B cell (primary cell): ENCODE measurements at regions of chr11 and their contacts with region 1.

Region 1: DNA sequence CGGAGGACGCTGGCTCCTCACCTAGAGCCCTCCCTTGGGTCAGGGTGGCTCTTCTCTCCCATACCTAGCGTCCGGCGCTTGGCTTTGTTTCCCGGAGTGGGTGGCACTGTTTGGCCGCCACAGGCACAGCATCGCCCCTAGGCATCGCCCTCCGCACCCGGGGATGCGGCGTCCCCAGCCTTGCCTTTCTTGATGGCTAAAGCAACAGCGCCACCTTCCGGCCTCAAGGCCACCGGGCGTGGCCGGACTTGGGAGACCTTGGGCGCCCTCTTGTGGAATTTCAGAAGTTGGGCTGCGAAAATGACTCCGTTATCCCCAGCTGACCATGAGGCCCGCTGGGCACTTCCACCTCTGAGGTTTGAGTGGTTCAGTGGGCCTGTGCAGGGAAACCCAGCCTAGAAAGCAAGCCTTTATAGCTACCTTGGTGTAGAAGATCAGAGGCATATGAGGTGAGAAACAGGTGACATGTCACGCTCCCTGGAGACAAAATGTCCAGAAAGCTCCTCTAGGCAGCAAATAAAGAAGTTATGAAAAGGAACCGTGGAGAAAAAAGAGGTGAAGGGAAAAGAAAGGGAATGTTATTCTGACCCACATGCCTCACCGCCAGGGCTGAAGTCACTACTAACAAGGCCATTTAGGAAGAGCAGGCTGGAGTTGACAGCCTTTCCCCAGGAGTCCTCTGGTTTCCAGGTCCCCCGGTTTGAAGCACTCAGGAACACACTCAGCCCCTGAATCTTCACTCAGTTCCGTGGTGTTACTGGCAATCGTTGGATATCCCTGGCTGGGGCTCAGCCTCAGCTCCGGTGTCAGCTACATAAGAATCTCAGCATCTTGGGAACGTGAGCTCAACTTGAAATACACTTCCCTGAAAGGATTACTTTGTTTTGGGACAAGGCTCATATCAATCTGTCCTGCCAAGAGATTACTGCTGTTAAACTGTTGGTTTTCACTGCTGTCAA is 54.1 kb downstream of the SNX19 start:
- DNase-seq: peak; percentile 90
- ATAC-seq: peak; percentile 90
- H3K4me3 ChIP-seq: no peak overlapping the region
- H3K4me3 Mint-ChIP-seq: no peak overlapping the region
- H3K27ac ChIP-seq: no peak overlapping the region
- H3K27ac Mint-ChIP-seq: no peak overlapping the region
- H3K4me1 ChIP-seq: peaks cover 0 to 4% of the 10 kb centered on the region in 2 donors
- H3K4me1 Mint-ChIP-seq: peaks cover 12% of the 10 kb centered on the region
- H3K27me3 ChIP-seq: no peaks in the 10 kb centered on the region
- H3K27me3 Mint-ChIP-seq: no peaks in the 10 kb centered on the region
- CTCF ChIP-seq: peak; percentile 100

Region 2: GRCh38 chr11:130213143-130213978 is 648.8 kb before region 1 on chr11:
- CTCF ChIA-PET with region 1: interaction called, 51 read pairs
- POLR2A ChIA-PET with region 1: no interaction called
- intact Hi-C with region 1: loop called (anchors 1 kb)
- DNase-seq: peak; percentile 81
- ATAC-seq: peak; percentile 98
- H3K4me3 ChIP-seq: no peak overlapping the region
- H3K4me3 Mint-ChIP-seq: no peak overlapping the region
- H3K27ac ChIP-seq: no peak overlapping the region
- H3K27ac Mint-ChIP-seq: peak overlapping the region; percentile 59
- H3K4me1 ChIP-seq: peaks cover 0 to 10% of the 10 kb centered on the region in 2 donors
- H3K4me1 Mint-ChIP-seq: peaks cover 11% of the 10 kb centered on the region
- H3K27me3 ChIP-seq: no peaks in the 10 kb centered on the region
- H3K27me3 Mint-ChIP-seq: peaks cover 4% of the 10 kb centered on the region
- CTCF ChIP-seq: peak; percentile 97

Region 3: DNA sequence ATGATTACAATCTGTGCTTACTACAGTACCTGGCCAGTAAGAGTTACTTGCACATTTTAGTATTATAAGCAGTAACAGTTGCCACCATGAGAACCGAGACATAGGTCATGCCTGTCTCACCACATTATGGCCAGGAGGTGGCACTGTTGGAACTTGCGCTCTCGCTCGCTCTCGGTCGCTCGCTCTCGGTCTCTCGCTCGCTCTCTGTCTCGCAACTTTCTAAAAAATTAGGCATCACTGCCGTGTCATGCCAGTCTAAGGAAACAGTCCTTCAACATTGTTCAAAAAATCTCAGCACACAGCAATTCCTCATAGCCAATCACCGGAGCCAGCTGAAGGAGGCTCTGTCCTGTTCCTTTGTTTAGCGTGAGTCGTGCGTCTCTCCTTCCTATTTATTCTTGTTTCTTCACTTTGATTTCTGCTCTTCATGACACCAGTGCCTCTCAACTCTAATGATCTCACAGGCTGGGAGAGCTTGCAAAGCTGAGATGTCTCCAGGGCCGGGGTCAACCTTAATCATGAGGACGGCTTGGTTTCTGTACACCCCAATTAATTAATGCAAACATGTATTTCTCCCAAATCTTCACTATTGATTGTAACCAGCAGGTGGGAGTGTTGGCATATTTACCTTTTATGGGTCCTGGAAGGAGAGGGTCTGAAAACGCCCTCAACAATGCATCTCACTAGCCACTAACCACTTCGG is 427.5 kb before region 1 on chr11:
- CTCF ChIA-PET with region 1: interaction called, 112 read pairs
- POLR2A ChIA-PET with region 1: no interaction called
- intact Hi-C with region 1: loop called (anchors 1 kb)
- DNase-seq: peak; percentile 83
- ATAC-seq: peak; percentile 88
- H3K4me3 ChIP-seq: peak overlapping the region; percentile 52 to 95 (median 73)
- H3K4me3 Mint-ChIP-seq: no peak overlapping the region
- H3K27ac ChIP-seq: no peak overlapping the region
- H3K27ac Mint-ChIP-seq: no peak overlapping the region
- H3K4me1 ChIP-seq: peaks cover 4% of the 10 kb centered on the region in 2 donors
- H3K4me1 Mint-ChIP-seq: peaks cover 3% of the 10 kb centered on the region
- H3K27me3 ChIP-seq: peaks cover 0 to 12% (median 7%) of the 10 kb centered on the region in 4 experiments
- H3K27me3 Mint-ChIP-seq: peaks cover 41% of the 10 kb centered on the region
- CTCF ChIP-seq: peak; percentile 96

Region 4: DNA sequence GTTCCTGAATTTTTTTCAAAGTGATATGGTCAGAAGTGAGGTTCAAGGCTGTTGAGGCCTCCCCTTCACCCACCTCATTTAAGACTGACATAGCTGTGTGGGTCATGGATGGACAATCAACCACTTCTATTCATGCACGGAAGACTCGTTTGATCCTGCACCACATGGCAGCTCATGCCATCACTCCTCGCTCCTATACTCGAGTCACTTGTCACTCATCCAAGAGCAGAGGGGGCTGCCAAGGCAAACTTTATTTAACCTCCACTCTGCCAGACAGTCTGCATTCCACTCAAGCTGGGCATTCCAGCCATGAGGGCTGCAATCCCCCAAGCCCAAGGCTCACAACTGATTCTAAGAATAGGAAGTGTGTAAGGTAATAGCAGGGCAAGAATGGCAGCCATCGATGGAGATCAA is 20.0 kb after region 1 on chr11:
- CTCF ChIA-PET with region 1: interaction called, 11 read pairs
- POLR2A ChIA-PET with region 1: no interaction called
- intact Hi-C with region 1: no loop called
- DNase-seq: no peak
- ATAC-seq: no peak
- H3K4me3 ChIP-seq: no peak overlapping the region
- H3K4me3 Mint-ChIP-seq: no peak overlapping the region
- H3K27ac ChIP-seq: no peak overlapping the region
- H3K27ac Mint-ChIP-seq: no peak overlapping the region
- H3K4me1 ChIP-seq: no peaks in the 10 kb centered on the region
- H3K4me1 Mint-ChIP-seq: no peaks in the 10 kb centered on the region
- H3K27me3 ChIP-seq: no peaks in the 10 kb centered on the region
- H3K27me3 Mint-ChIP-seq: no peaks in the 10 kb centered on the region
- CTCF ChIP-seq: no peak

Region 5: DNA sequence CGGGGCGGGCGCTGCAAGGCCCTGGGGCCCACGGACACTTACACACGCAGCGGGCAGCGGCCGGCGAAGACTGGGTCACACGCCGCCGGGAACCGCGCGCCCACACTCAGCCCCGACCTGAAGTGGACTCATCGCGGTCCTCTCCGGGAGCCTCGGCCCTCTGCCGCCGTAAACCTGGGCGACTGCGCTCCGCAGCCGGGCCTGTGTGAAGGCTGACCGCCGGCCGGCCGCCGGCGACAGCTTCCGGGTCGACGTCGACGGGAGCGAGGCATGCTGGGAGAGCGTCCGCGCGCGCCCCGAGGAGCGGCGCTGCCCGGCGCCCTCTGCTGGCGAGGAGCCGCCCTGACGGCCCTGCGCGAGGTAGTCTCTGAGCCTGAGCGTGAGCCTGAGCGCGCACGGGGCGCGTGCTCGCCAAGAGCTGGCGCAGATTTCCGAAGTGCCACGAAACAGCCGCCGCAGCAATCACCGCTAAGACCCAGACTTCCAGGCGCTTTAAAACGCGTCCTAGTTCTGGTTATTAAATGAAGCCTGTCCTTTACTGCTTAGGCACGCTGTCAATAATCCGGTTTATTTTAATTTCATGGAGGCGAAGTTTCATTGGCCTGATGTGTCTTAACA is 54.2 kb after region 1 on chr11 and contains the start of gene SNX19:
- CTCF ChIA-PET with region 1: interaction called, 9 read pairs
- POLR2A ChIA-PET with region 1: interaction called, 3 read pairs
- intact Hi-C with region 1: loop called (anchors 1 kb)
- DNase-seq: peak; percentile 94
- ATAC-seq: peak; percentile 99
- H3K4me3 ChIP-seq: peak within 1 kb of the TSS; percentile 70 to 97 (median 85)
- H3K4me3 Mint-ChIP-seq: peak within 1 kb of the TSS; percentile 91
- H3K27ac ChIP-seq: peak within 1 kb of the TSS; percentile 73 to 91
- H3K27ac Mint-ChIP-seq: peak within 1 kb of the TSS; percentile 90
- H3K4me1 ChIP-seq: peaks cover 12 to 24% of the 10 kb centered on the region in 2 donors
- H3K4me1 Mint-ChIP-seq: peaks cover 41% of the 10 kb centered on the region
- H3K27me3 ChIP-seq: peaks cover 0 to 9% (median 0%) of the 10 kb centered on the region in 4 experiments
- H3K27me3 Mint-ChIP-seq: peaks cover 21% of the 10 kb centered on the region
- CTCF ChIP-seq: peak; percentile 97
- total RNA-seq, gene SNX19: 74.0 and 76.0 TPM in 2 replicates